CD8-positive, alpha-beta T cell (primary cell): ENCODE measurements at regions of chr11 and their contacts with region 1.

Region 1: DNA sequence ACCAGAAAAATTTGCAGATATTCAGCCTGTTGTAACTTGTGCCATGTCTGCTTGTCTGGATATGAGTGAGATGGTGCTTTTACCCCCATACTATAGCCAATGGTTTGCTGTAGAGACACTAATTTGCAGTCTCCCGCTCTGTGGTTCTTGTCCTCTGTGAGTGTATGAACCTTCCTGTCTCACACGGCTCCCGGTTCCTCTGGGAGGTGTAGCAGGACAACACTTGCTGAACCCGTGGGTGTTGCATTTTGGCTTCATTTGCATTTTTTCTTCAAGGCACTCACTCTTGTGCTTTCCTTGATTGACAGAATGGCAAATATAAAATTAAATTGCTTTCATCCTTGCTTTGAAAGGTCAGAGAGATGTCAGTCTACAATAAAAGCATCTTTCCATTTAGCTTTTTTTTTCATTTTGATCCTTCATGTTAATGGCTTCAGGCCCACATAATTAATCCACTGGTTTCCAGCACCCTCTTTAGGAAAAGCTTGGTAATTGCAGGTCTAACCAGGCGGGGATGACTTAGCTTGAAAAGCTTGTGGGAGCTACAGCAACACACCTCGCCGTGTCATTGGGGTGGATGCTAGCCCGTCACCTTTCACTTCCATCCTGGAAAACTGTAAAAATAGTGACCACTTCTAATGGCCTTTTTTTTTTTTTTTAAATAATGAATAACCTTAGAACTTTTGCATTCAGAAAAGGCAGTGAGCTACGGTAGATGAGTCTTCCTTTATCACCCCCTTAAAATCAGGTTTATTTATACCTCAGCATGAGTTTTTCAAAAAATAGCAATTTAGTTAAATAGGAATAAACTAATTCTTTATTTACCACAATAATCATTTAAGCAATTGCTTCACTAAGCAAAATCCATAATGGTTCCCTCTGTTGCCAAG is 27.4 kb upstream of the ST14 start:
- DNase-seq: peak in 8 of 9 experiments; percentile 33 to 76 (median 54)
- ATAC-seq: peak; percentile 92
- H3K4me3 ChIP-seq: no peak overlapping the region
- H3K4me3 Mint-ChIP-seq: no peak overlapping the region
- H3K27ac ChIP-seq: no peak overlapping the region
- H3K27ac Mint-ChIP-seq: no peak overlapping the region
- H3K4me1 ChIP-seq: no peaks in the 10 kb centered on the region
- H3K4me1 Mint-ChIP-seq: no peaks in the 10 kb centered on the region
- H3K27me3 ChIP-seq: no peaks in the 10 kb centered on the region
- H3K27me3 Mint-ChIP-seq: no peaks in the 10 kb centered on the region
- CTCF ChIP-seq: peak; percentile 90

Region 2: DNA sequence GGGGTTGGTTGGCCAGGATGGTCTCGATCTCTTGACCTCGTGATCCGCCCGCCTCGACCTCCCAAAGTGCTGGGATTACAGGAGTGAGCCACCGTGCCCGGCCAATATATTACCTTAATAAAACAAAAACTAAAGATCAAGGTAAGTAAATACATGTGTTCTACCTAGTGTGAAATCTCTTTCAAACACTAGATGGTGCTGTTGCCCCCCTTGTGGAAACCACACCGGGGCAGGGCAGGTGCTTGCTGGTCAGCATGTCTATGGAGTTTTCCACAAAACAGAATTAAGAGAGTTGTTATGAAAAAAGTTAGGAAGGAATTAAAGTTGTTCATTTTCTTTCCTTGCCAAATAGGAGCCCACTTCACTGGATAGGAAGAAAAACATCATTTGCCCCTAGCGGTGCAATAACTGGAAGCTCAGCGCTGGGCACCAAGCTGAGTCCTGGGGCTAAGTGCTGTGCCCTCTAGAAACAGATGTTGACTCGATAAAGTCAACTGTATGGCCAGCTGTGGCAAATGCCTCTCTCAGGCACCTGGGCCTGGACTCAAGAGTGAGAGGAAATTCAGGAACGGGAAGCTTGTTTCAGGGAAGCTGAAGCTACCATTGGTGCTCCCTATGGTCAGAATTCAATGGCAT is 1247.4 kb before region 1 on chr11:
- CTCF ChIA-PET with region 1: no interaction called
- POLR2A ChIA-PET with region 1: no interaction called
- intact Hi-C with region 1: no loop called
- DNase-seq: peak in 7 of 9 experiments; percentile 35 to 78 (median 57)
- ATAC-seq: peak; percentile 55
- H3K4me3 ChIP-seq: no peak overlapping the region
- H3K4me3 Mint-ChIP-seq: no peak overlapping the region
- H3K27ac ChIP-seq: no peak overlapping the region
- H3K27ac Mint-ChIP-seq: no peak overlapping the region
- H3K4me1 ChIP-seq: no peaks in the 10 kb centered on the region
- H3K4me1 Mint-ChIP-seq: peaks cover 1% of the 10 kb centered on the region
- H3K27me3 ChIP-seq: peaks cover 6 to 10% of the 10 kb centered on the region in 2 experiments
- H3K27me3 Mint-ChIP-seq: peaks cover 67% of the 10 kb centered on the region
- CTCF ChIP-seq: peak; percentile 93

Region 3: GRCh38 chr11:129117595-129118350 is 1014.4 kb before region 1 on chr11:
- CTCF ChIA-PET with region 1: no interaction called
- POLR2A ChIA-PET with region 1: no interaction called
- intact Hi-C with region 1: loop called in 1 of 2 experiments (anchors 10 kb)
- DNase-seq: peak in 8 of 9 experiments; percentile 13 to 72 (median 43)
- ATAC-seq: peak; percentile 40
- H3K4me3 ChIP-seq: no peak overlapping the region
- H3K4me3 Mint-ChIP-seq: no peak overlapping the region
- H3K27ac ChIP-seq: no peak overlapping the region
- H3K27ac Mint-ChIP-seq: no peak overlapping the region
- H3K4me1 ChIP-seq: no peaks in the 10 kb centered on the region
- H3K4me1 Mint-ChIP-seq: peaks cover 2% of the 10 kb centered on the region
- H3K27me3 ChIP-seq: no peaks in the 10 kb centered on the region
- H3K27me3 Mint-ChIP-seq: no peaks in the 10 kb centered on the region
- CTCF ChIP-seq: peak; percentile 95

Region 4: DNA sequence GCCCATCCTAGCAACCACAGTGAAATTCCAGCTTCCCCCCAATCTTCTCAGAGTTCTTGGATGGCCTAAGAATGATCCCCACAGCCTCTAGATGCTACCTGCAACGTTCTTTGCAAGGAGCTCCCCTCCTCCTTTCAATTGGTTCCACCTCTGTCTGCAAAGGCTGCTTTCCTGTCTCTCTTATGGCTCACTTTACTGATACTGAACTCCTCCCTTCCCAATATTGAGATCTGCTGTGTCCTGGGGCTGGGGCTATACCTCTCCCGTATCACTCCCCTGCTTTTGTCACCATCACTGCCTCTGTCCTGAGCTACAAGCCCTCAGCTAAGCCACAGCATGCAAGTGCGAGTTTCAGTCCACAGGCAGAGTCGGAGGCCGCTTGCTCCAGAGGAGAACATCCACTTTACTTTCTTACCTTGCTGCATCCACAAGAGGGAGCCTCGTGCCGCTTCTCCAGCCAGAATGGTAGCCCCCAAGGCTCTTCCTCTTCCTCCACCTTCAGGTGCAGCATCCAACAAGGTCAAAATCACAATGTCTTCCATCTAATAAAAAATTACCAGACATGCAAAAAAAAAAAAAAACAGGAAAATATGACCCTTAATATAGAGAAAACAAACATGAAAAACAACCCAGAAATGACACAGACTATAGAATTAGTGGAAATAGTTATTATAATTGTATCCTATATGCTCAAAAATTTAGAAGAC is 365.2 kb before region 1 on chr11:
- CTCF ChIA-PET with region 1: interaction called, 7 read pairs
- POLR2A ChIA-PET with region 1: no interaction called
- intact Hi-C with region 1: loop called (anchors 1 to 2 kb)
- DNase-seq: peak in 4 of 9 experiments; percentile 10 to 28 (median 24)
- ATAC-seq: no peak
- H3K4me3 ChIP-seq: no peak overlapping the region
- H3K4me3 Mint-ChIP-seq: no peak overlapping the region
- H3K27ac ChIP-seq: no peak overlapping the region
- H3K27ac Mint-ChIP-seq: no peak overlapping the region
- H3K4me1 ChIP-seq: no peaks in the 10 kb centered on the region
- H3K4me1 Mint-ChIP-seq: peaks cover 2% of the 10 kb centered on the region
- H3K27me3 ChIP-seq: no peaks in the 10 kb centered on the region
- H3K27me3 Mint-ChIP-seq: peaks cover 4% of the 10 kb centered on the region
- CTCF ChIP-seq: peak; percentile 42

Region 5: DNA sequence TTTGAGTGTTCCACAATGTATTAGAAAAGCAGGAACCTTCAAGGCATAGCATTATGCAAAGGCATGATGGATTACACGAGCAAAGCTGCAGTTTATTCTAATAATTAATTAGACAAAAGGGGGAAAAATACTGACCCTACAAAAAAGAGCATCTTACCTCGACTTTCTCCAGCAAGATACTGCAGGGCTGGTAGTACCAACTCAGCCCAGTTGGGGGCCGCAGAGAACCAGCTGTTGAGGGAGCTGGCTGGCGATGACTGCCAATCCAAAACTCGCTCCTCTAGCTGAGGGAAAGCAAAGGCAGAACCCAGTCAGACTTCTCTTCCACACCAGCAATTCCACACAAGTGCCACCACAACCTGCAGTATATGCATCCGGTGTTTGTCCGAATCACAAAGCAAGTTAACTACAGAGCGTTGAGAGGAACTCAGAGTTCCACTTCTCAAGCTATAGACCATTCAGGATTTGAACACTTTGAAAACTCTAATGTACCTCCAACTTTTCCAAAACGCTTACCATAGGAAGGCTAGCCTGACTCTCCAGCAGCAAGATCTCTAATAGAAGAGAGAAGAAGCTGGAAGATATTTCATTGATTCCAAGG is 250.5 kb before region 1 on chr11:
- CTCF ChIA-PET with region 1: interaction called, 19 read pairs
- POLR2A ChIA-PET with region 1: no interaction called
- intact Hi-C with region 1: loop called in 1 of 2 experiments (anchors 2 kb)
- DNase-seq: peak; percentile 13 to 64 (median 42)
- ATAC-seq: peak; percentile 82
- H3K4me3 ChIP-seq: no peak overlapping the region
- H3K4me3 Mint-ChIP-seq: no peak overlapping the region
- H3K27ac ChIP-seq: no peak overlapping the region
- H3K27ac Mint-ChIP-seq: no peak overlapping the region
- H3K4me1 ChIP-seq: no peaks in the 10 kb centered on the region
- H3K4me1 Mint-ChIP-seq: no peaks in the 10 kb centered on the region
- H3K27me3 ChIP-seq: no peaks in the 10 kb centered on the region
- H3K27me3 Mint-ChIP-seq: no peaks in the 10 kb centered on the region
- CTCF ChIP-seq: peak; percentile 60

Region 6: GRCh38 chr11:129930296-129930695 is 201.9 kb before region 1 on chr11:
- CTCF ChIA-PET with region 1: interaction called, 44 read pairs
- POLR2A ChIA-PET with region 1: interaction called, 3 read pairs
- intact Hi-C with region 1: no loop called
- DNase-seq: peak in 1 of 9 experiments; percentile 11
- ATAC-seq: no peak
- H3K4me3 ChIP-seq: no peak overlapping the region
- H3K4me3 Mint-ChIP-seq: no peak overlapping the region
- H3K27ac ChIP-seq: no peak overlapping the region
- H3K27ac Mint-ChIP-seq: no peak overlapping the region
- H3K4me1 ChIP-seq: no peaks in the 10 kb centered on the region
- H3K4me1 Mint-ChIP-seq: no peaks in the 10 kb centered on the region
- H3K27me3 ChIP-seq: no peaks in the 10 kb centered on the region
- H3K27me3 Mint-ChIP-seq: no peaks in the 10 kb centered on the region
- CTCF ChIP-seq: no peak

Region 7: GRCh38 chr11:130002846-130003716 is 129.1 kb before region 1 on chr11:
- CTCF ChIA-PET with region 1: interaction called, 10 read pairs
- POLR2A ChIA-PET with region 1: interaction called, 7 read pairs
- intact Hi-C with region 1: no loop called
- DNase-seq: peak; percentile 82 to 96 (median 89)
- ATAC-seq: peak; percentile 77
- H3K4me3 ChIP-seq: peak overlapping the region; percentile 69 to 71
- H3K4me3 Mint-ChIP-seq: peak overlapping the region; percentile 99
- H3K27ac ChIP-seq: peak overlapping the region; percentile 99 to 100
- H3K27ac Mint-ChIP-seq: peak overlapping the region; percentile 100
- H3K4me1 ChIP-seq: peaks cover 24% of the 10 kb centered on the region
- H3K4me1 Mint-ChIP-seq: peaks cover 37% of the 10 kb centered on the region
- H3K27me3 ChIP-seq: no peaks in the 10 kb centered on the region
- H3K27me3 Mint-ChIP-seq: no peaks in the 10 kb centered on the region
- CTCF ChIP-seq: no peak

Region 8: DNA sequence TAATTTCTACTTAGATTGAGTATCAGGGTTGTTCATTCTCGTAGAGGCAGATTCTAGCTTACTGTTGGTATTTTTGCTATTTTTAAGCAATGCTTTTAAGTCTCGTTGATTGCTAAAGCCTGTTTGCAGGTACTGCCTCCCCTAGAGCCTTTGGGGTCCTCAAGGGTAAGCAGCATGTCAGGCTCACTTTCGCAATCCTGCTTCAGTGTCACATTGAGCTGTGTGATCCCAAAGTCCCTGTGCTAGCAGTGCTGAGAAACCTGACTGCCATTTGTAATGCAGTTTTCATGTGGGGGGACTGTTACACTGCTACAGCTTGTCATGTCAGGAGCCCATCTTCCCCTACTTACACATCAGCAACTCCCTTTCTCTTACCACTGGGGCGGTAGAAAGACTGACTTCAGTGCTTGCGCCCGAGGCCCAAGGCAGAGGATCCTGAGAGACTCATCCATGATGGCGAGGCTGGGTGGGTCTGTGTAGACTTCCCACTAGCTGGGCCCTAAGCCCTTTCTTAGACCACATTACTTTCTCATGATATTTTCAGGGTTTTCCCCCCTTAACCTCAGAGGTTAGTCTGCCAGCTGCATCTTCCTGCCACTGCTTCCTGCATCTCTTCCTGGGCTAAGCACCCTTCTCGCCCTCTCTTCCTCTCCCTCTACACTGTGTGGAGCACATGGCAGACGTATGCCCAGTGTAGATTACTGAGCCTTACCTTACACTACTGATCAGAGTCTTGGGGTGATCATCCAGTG is 13.4 kb before region 1 on chr11:
- CTCF ChIA-PET with region 1: interaction called, 23 read pairs
- POLR2A ChIA-PET with region 1: interaction called, 3 read pairs
- intact Hi-C with region 1: no loop called
- DNase-seq: peak in 6 of 9 experiments; percentile 7 to 74 (median 44)
- ATAC-seq: peak; percentile 76
- H3K4me3 ChIP-seq: no peak overlapping the region
- H3K4me3 Mint-ChIP-seq: peak overlapping the region; percentile 13
- H3K27ac ChIP-seq: no peak overlapping the region
- H3K27ac Mint-ChIP-seq: no peak overlapping the region
- H3K4me1 ChIP-seq: peaks cover 36% of the 10 kb centered on the region
- H3K4me1 Mint-ChIP-seq: peaks cover 43% of the 10 kb centered on the region
- H3K27me3 ChIP-seq: no peaks in the 10 kb centered on the region
- H3K27me3 Mint-ChIP-seq: no peaks in the 10 kb centered on the region
- CTCF ChIP-seq: no peak